ENCODE measurements at regions of chr17 and their contacts with region 1.

Region 1: DNA sequence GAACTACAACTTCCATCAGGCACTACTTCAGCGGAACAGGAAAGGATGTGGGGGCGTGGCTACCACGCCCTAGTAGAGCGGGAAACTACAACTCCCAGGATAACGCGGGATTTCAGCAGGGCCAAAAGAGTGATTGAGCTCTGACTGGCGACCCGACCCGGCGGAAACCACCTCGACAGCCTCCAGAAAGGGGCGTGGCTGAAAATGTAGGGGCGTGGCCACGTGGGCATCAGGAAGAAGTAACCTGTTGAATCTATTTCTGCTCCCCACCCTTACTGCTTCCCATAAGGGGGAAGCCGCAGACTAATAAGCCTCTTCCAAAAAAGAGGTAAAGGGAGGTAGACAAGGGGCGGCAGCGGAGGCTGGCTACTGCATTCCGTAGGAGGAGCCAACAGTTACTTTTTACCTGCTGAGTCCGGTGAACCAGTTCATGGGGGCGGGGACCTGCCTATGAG is at the start of gene TMEM102:
- DNase-seq: peak; percentile 96 to 100 (median 98)
- ATAC-seq: peak; percentile 82
- H3K4me3 ChIP-seq: peak within 1 kb of the TSS; percentile 86
- H3K4me3 Mint-ChIP-seq: peak within 1 kb of the TSS; percentile 87
- H3K27ac ChIP-seq: peak within 1 kb of the TSS; percentile 83 to 93
- H3K27ac Mint-ChIP-seq: peak within 1 kb of the TSS; percentile 87
- H3K4me1 ChIP-seq: peaks cover 51% of the 10 kb centered on the region
- H3K4me1 Mint-ChIP-seq: peaks cover 41% of the 10 kb centered on the region
- H3K27me3 ChIP-seq: peaks cover 16 to 21% of the 10 kb centered on the region in 2 experiments
- H3K27me3 Mint-ChIP-seq: peaks cover 16% of the 10 kb centered on the region
- CTCF ChIP-seq: no peak
- total RNA-seq, gene TMEM102: 6.8 to 7.1 TPM

Region 2: DNA sequence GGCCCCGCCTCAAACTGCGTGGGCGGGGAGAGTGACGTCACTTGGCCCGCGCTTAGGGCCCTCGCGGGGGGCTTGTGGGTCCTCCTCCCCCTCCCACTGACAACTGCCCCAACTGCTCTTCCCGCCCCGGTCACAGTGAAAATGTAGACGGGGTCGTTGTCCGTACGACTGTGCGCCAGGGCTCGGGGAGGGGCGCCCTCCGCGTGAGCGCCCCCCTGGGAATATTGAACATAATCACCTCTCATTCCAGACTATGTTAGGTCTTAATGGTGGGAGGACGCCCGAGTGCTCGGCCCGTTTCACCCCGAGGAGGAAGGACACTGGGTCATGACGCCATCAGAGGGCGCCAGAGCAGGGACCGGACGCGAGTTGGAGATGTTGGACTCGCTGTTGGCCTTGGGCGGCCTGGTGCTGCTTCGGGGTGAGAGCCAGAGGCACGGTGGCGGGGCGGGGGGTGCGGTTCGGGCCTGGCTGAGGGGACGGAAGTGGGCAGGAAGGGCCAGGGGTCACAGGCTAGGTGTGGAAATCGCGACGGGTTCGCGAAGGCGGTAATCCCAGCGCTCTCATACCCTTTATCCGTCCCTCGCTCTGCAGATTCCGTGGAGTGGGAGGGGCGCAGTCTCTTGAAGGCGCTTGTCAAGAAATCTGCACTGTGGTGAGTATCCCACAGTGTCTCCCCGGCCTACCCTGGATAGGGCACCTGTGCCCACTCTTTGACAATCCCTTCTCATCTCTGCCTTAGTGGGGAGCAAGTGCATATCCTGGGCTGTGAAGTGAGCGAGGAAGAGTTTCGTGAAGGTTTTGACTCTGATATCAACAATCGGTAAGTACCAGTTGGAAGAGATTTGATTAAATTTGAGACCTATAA is 182.8 kb before region 1 on chr17 and contains the start of gene ELP5:
- CTCF ChIA-PET with region 1: no interaction called
- POLR2A ChIA-PET with region 1: no interaction called
- intact Hi-C with region 1: loop called in 1 of 2 experiments (anchors 5 kb)
- DNase-seq: peak; percentile 64 to 99 (median 80)
- ATAC-seq: peak; percentile 39
- H3K4me3 ChIP-seq: peak within 1 kb of the TSS; percentile 71
- H3K4me3 Mint-ChIP-seq: peak within 1 kb of the TSS; percentile 94
- H3K27ac ChIP-seq: peak within 1 kb of the TSS; percentile 99
- H3K27ac Mint-ChIP-seq: peak within 1 kb of the TSS; percentile 100
- H3K4me1 ChIP-seq: peaks cover 36% of the 10 kb centered on the region
- H3K4me1 Mint-ChIP-seq: peaks cover 45% of the 10 kb centered on the region
- H3K27me3 ChIP-seq: no peaks in the 10 kb centered on the region
- H3K27me3 Mint-ChIP-seq: no peaks in the 10 kb centered on the region
- CTCF ChIP-seq: peak; percentile 28
- total RNA-seq, gene ELP5: 20.1 to 21.3 TPM

Region 3: DNA sequence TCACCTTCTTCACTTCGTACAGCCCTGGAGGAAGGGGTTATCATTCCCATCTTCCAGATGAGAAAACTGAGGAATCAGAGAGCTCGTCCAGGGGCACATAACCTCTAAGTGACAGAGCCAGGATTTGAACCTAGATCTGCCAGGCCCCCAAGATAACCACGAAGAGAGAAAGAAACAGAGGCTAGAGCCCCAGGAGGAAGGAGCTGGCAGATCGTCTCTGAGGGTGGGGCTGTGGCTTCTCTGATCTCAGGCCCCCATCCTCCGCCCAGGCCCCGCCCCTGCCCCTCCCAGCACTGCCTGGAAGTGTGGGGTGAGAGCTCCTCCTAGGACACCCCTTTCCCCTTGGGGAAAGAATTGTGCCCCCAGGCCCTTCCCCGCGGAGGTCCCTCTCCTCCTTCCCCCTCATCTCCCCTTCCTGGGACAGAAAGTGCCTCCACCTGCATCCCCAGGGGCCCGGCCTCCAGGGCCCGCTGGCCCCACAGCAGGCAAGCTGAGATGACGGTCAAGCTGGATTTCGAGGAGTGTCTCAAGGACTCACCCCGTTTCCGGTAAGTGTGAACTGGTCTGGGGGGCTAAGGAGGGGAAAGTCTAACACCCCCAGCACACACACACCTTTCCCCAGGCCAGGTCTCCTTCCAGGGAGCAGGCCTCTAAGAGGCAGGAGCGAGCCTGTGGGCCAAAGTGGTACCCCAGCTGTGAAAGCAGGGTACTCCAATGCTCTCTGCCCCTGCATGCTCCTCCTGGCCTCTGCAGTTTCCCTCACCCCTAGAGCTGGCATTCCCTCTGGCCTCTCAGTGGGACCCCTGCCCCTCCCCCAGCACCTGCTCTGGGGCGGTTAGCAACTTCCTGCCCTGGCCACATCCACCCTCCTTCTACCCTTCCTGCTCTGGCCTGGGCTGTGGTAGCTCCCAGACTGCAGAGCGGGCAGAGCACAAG is 98.7 kb before region 1 on chr17 and contains the start of gene ACAP1:
- CTCF ChIA-PET with region 1: no interaction called
- POLR2A ChIA-PET with region 1: interaction called, 13 read pairs
- intact Hi-C with region 1: no loop called
- DNase-seq: peak; percentile 75 to 95 (median 90)
- ATAC-seq: peak; percentile 96
- H3K4me3 ChIP-seq: peak within 1 kb of the TSS; percentile 91
- H3K4me3 Mint-ChIP-seq: peak within 1 kb of the TSS; percentile 89
- H3K27ac ChIP-seq: peak within 1 kb of the TSS; percentile 55 to 64
- H3K27ac Mint-ChIP-seq: peak within 1 kb of the TSS; percentile 91
- H3K4me1 ChIP-seq: peaks cover 88% of the 10 kb centered on the region
- H3K4me1 Mint-ChIP-seq: peaks cover 52% of the 10 kb centered on the region
- H3K27me3 ChIP-seq: no peaks in the 10 kb centered on the region
- H3K27me3 Mint-ChIP-seq: no peaks in the 10 kb centered on the region
- CTCF ChIP-seq: no peak
- total RNA-seq, gene ACAP1: 565 to 575 TPM

Region 4: GRCh38 chr17:7403977-7404736 is 31.1 kb before region 1 on chr17 and contains the start of gene TMEM256:
- CTCF ChIA-PET with region 1: interaction called, 18 read pairs
- POLR2A ChIA-PET with region 1: interaction called, 28 read pairs
- intact Hi-C with region 1: loop called (anchors 1 to 2 kb)
- DNase-seq: peak; percentile 90 to 99 (median 94)
- ATAC-seq: peak; percentile 88
- H3K4me3 ChIP-seq: peak within 1 kb of the TSS; percentile 77
- H3K4me3 Mint-ChIP-seq: peak within 1 kb of the TSS; percentile 98
- H3K27ac ChIP-seq: peak within 1 kb of the TSS in 1 of 2 donors; percentile 82
- H3K27ac Mint-ChIP-seq: peak within 1 kb of the TSS; percentile 87
- H3K4me1 ChIP-seq: peaks cover 36% of the 10 kb centered on the region
- H3K4me1 Mint-ChIP-seq: peaks cover 31% of the 10 kb centered on the region
- H3K27me3 ChIP-seq: peaks cover 0 to 5% of the 10 kb centered on the region in 2 experiments
- H3K27me3 Mint-ChIP-seq: no peaks in the 10 kb centered on the region
- CTCF ChIP-seq: no peak
- total RNA-seq, gene TMEM256: 29.0 to 29.4 TPM

Region 5: DNA sequence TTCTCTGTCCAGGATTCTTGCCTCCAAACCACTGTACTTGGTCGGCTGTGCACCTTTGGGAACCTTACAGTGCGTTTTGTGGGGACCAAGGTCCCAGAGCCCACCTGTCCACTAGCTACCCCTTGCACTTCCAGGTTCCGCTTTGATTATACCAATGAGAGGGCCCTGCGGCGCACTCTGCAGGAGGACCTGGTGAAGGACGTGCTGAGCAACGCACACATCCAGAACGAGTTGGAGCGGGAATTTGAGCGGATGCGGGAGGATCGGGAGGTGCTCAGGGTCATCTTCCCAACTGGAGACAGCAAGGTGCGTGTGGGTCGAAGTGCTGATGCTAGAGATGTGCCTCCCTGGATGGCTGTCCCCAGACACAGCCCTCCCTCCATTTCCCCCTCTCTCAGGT is 67.7 kb after region 1 on chr17:
- CTCF ChIA-PET with region 1: interaction called, 6 read pairs
- POLR2A ChIA-PET with region 1: interaction called, 4 read pairs
- intact Hi-C with region 1: loop called (anchors 2 kb)
- DNase-seq: peak in 4 of 14 experiments; percentile 21 to 42 (median 34)
- ATAC-seq: peak; percentile 39
- H3K4me3 ChIP-seq: no peak overlapping the region
- H3K4me3 Mint-ChIP-seq: no peak overlapping the region
- H3K27ac ChIP-seq: no peak overlapping the region
- H3K27ac Mint-ChIP-seq: no peak overlapping the region
- H3K4me1 ChIP-seq: no peaks in the 10 kb centered on the region
- H3K4me1 Mint-ChIP-seq: no peaks in the 10 kb centered on the region
- H3K27me3 ChIP-seq: no peaks in the 10 kb centered on the region
- H3K27me3 Mint-ChIP-seq: no peaks in the 10 kb centered on the region
- CTCF ChIP-seq: no peak

Region 6: DNA sequence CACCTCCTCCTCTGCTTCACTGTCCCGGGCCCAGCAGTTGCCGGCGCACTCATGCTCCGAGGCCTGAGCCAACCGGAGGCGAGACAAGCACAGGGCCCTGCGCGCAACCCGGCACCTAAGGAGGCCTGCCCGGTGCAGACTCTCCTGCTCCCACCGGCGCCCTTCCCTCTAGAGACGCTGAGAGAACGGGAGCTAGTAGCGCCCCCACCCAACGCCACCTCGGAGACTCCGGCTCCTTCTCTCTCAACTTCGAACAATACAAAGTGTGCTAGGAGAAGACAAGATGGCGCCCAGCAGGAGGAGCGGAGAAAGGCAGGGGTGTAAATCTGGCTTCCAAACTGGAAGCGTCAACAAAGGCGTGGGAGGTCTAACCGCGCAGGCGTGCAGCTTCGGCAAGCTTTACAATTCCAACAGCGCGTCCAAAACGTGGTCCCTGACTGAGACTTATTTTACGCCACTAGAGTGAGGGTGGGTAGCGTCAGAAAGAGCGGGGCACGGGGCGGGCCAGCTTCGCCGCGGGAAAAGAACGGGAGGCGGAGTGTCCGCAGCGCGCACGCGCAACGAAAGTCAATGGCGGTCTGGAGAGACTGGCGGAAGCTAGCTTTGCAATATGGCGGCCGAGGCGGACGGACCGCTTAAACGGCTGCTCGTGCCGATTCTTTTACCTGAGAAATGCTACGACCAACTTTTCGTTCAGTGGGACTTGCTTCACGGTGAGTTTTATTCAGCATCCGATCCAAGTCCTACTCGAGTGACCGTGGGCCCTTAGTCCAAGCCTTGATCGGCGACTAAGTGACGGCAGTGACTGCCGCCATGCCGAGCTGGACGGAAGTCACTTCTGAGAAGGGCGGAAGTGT is 148.2 kb after region 1 on chr17 and contains the start of gene MPDU1:
- CTCF ChIA-PET with region 1: interaction called, 4 read pairs
- POLR2A ChIA-PET with region 1: interaction called, 20 read pairs
- intact Hi-C with region 1: no loop called
- DNase-seq: peak; percentile 89 to 98 (median 94)
- ATAC-seq: peak; percentile 85
- H3K4me3 ChIP-seq: peak within 1 kb of the TSS; percentile 86
- H3K4me3 Mint-ChIP-seq: peak within 1 kb of the TSS; percentile 98
- H3K27ac ChIP-seq: peak within 1 kb of the TSS; percentile 78 to 98
- H3K27ac Mint-ChIP-seq: peak within 1 kb of the TSS; percentile 98
- H3K4me1 ChIP-seq: peaks cover 56% of the 10 kb centered on the region
- H3K4me1 Mint-ChIP-seq: peaks cover 52% of the 10 kb centered on the region
- H3K27me3 ChIP-seq: no peaks in the 10 kb centered on the region
- H3K27me3 Mint-ChIP-seq: no peaks in the 10 kb centered on the region
- CTCF ChIP-seq: no peak
- total RNA-seq, gene MPDU1: 12.0 to 12.9 TPM

Region 7: DNA sequence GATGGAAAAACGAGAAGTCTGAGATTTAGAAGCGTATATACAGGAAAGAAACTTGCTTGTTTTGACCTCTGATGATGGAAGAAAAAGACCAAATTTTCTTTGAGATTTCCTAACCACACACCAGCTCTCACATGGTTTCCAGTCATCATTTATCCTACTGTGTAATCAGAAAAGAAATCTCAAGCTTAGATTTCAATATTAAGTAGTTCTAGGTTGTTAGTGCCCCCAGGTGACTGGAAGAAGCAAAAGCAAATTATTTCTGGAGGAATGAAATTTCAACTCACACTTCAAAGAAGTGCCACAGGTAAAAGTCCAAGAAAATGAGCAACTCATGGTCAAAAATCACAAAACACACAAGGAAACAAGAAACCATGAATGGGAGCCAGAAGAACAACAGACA is 347.0 kb after region 1 on chr17:
- CTCF ChIA-PET with region 1: no interaction called
- POLR2A ChIA-PET with region 1: no interaction called
- intact Hi-C with region 1: no loop called
- DNase-seq: no peak
- ATAC-seq: no peak
- H3K4me3 ChIP-seq: no peak overlapping the region
- H3K4me3 Mint-ChIP-seq: no peak overlapping the region
- H3K27ac ChIP-seq: no peak overlapping the region
- H3K27ac Mint-ChIP-seq: no peak overlapping the region
- H3K4me1 ChIP-seq: no peaks in the 10 kb centered on the region
- H3K4me1 Mint-ChIP-seq: no peaks in the 10 kb centered on the region
- H3K27me3 ChIP-seq: peaks cover 0 to 10% of the 10 kb centered on the region in 2 experiments
- H3K27me3 Mint-ChIP-seq: peaks cover 7% of the 10 kb centered on the region
- CTCF ChIP-seq: no peak

Measured in CD4-positive, alpha-beta T cell (primary cell).